ENCODE measurements at regions of chr11 and their contacts with region 1.

Region 1: GRCh38 chr11:66022401-66023185 is 3.7 kb downstream of the CATSPER1 start:
- DNase-seq: peak; percentile 59 to 76 (median 63)
- H3K4me3 ChIP-seq: no peak overlapping the region
- H3K4me3 Mint-ChIP-seq: peak overlapping the region in 4 of 8 donors; percentile 33 to 72 (median 56)
- H3K27ac ChIP-seq: no peak overlapping the region
- H3K27ac Mint-ChIP-seq: peak overlapping the region in 1 of 7 donors; percentile 48
- H3K4me1 ChIP-seq: peaks cover 6% of the 10 kb centered on the region
- H3K4me1 Mint-ChIP-seq: peaks cover 0 to 9% (median 6%) of the 10 kb centered on the region in 4 donors
- H3K27me3 ChIP-seq: no peaks in the 10 kb centered on the region
- H3K27me3 Mint-ChIP-seq: peaks cover 4 to 6% of the 10 kb centered on the region in 2 donors

Region 2: DNA sequence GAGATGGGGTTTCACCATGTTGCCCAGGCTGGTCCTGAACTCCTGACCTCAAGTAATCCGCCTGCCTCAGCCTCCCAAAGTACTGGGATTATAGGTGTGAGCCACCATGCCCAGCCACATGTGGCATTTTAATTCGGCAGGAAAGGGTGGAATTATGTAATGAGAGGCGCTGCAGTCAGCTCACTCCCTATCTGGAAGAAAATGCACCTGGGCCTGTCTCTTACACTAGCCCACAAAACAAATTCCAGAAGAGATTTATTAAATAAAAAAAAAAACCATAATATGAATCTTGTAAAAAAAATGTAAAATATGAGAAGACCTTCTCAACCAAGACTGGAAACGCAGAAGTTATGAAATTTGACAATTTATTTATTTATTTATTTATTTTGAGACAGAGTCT is 318.7 kb before region 1 on chr11:
- CTCF ChIA-PET with region 1: interaction called, 13 read pairs
- POLR2A ChIA-PET with region 1: no interaction called
- intact Hi-C with region 1: no loop called
- DNase-seq: no peak
- H3K4me3 ChIP-seq: no peak overlapping the region
- H3K4me3 Mint-ChIP-seq: no peak overlapping the region
- H3K27ac ChIP-seq: no peak overlapping the region
- H3K27ac Mint-ChIP-seq: no peak overlapping the region
- H3K4me1 ChIP-seq: no peaks in the 10 kb centered on the region
- H3K4me1 Mint-ChIP-seq: peaks cover 0 to 10% (median 0%) of the 10 kb centered on the region in 4 donors
- H3K27me3 ChIP-seq: no peaks in the 10 kb centered on the region
- H3K27me3 Mint-ChIP-seq: peaks cover 1 to 7% of the 10 kb centered on the region in 2 donors

Region 3: GRCh38 chr11:65859200-65859811 is 163.3 kb before region 1 on chr11:
- CTCF ChIA-PET with region 1: no interaction called
- POLR2A ChIA-PET with region 1: no interaction called
- intact Hi-C with region 1: no loop called
- DNase-seq: peak; percentile 89 to 98 (median 92)
- H3K4me3 ChIP-seq: peak overlapping the region; percentile 55 to 81
- H3K4me3 Mint-ChIP-seq: peak overlapping the region; percentile 93 to 99 (median 96)
- H3K27ac ChIP-seq: peak overlapping the region; percentile 85
- H3K27ac Mint-ChIP-seq: peak overlapping the region; percentile 92 to 99 (median 97)
- H3K4me1 ChIP-seq: peaks cover 58% of the 10 kb centered on the region
- H3K4me1 Mint-ChIP-seq: peaks cover 32 to 64% (median 48%) of the 10 kb centered on the region in 4 donors
- H3K27me3 ChIP-seq: no peaks in the 10 kb centered on the region
- H3K27me3 Mint-ChIP-seq: no peaks in the 10 kb centered on the region

Region 4: DNA sequence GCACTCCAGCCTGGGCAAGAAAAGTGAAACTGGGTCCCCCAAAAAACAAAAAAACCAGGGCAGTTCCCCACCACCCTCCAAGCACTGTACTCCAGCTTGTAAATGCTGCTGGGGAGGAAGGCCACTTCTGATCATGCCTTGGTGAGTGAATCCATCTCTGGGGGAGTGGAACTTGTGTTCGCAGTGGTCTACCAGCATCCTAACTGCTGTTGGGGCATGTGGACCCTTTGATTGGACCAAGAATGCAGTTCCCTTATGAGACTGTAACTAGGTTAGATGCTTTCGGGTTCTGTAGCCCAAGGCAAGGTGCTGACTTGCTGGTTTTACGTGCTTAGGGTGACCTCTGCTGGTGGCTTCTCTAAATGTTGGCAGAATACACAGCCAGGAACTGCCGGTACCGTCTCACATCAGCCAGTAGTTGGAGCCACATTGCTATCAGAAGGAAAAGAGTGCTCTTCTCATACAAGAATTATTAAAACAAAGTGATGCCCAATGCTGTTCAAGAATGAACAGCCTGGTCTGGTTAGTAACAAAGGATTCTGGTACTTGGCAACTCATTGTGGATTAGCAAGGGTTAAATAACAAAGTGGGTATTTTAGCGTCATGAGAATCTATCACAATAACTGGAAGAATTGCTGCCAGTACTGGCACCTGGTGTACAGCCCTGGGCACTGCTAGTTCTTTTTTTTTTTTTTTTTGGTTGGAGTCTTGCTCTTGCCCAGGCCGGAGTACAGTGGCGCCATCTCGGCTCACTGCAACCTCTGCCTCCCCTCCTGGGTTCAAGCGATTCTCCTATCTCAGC is 33.6 kb before region 1 on chr11:
- CTCF ChIA-PET with region 1: interaction called, 5 read pairs
- POLR2A ChIA-PET with region 1: no interaction called
- intact Hi-C with region 1: loop called (anchors 1 kb)
- DNase-seq: peak; percentile 92 to 94 (median 93)
- H3K4me3 ChIP-seq: no peak overlapping the region
- H3K4me3 Mint-ChIP-seq: peak overlapping the region in 1 of 8 donors; percentile 3
- H3K27ac ChIP-seq: no peak overlapping the region
- H3K27ac Mint-ChIP-seq: peak overlapping the region; percentile 68 to 95 (median 86)
- H3K4me1 ChIP-seq: peaks cover 6% of the 10 kb centered on the region
- H3K4me1 Mint-ChIP-seq: peaks cover 5 to 7% (median 6%) of the 10 kb centered on the region in 4 donors
- H3K27me3 ChIP-seq: no peaks in the 10 kb centered on the region
- H3K27me3 Mint-ChIP-seq: no peaks in the 10 kb centered on the region

Region 5: GRCh38 chr11:66011239-66011784 is 11.3 kb before region 1 on chr11:
- CTCF ChIA-PET with region 1: interaction called, 16 read pairs
- POLR2A ChIA-PET with region 1: no interaction called
- intact Hi-C with region 1: no loop called
- DNase-seq: no peak
- H3K4me3 ChIP-seq: no peak overlapping the region
- H3K4me3 Mint-ChIP-seq: no peak overlapping the region
- H3K27ac ChIP-seq: no peak overlapping the region
- H3K27ac Mint-ChIP-seq: no peak overlapping the region
- H3K4me1 ChIP-seq: no peaks in the 10 kb centered on the region
- H3K4me1 Mint-ChIP-seq: peaks cover 0 to 5% (median 3%) of the 10 kb centered on the region in 4 donors
- H3K27me3 ChIP-seq: peaks cover 13% of the 10 kb centered on the region
- H3K27me3 Mint-ChIP-seq: peaks cover 9 to 14% of the 10 kb centered on the region in 2 donors

Region 6: DNA sequence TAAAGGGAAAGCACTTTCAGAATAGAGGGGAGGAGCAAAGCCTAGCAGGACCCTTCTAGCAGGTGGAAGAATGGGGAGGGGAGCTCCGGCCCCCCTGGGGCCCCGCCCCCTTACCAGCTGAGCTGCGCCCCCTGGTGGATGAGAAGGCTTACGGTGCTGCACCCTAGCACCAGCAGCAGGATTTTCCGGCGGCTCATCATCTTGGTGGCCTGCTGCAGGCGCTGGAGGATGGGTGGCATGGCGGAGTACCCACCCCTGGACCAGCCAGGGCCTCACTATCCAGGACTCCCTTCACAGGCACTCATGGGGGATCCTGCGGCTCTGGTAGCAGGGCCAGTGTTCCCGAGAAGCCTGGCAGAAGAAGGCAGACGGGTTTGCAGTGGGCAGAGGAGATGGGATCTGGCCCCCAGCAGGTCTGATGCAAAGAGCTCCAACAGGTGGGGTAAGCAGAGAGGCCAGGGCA is 22.6 kb after region 1 on chr11:
- CTCF ChIA-PET with region 1: interaction called, 19 read pairs
- POLR2A ChIA-PET with region 1: no interaction called
- intact Hi-C with region 1: no loop called
- DNase-seq: peak; percentile 78 to 86 (median 81)
- H3K4me3 ChIP-seq: no peak overlapping the region
- H3K4me3 Mint-ChIP-seq: peak overlapping the region in 2 of 8 donors; percentile 32 to 55
- H3K27ac ChIP-seq: no peak overlapping the region
- H3K27ac Mint-ChIP-seq: peak overlapping the region in 2 of 7 donors; percentile 9 to 67
- H3K4me1 ChIP-seq: peaks cover 12% of the 10 kb centered on the region
- H3K4me1 Mint-ChIP-seq: peaks cover 5 to 16% (median 9%) of the 10 kb centered on the region in 4 donors
- H3K27me3 ChIP-seq: no peaks in the 10 kb centered on the region
- H3K27me3 Mint-ChIP-seq: peaks cover 0 to 2% of the 10 kb centered on the region in 2 donors

Region 7: DNA sequence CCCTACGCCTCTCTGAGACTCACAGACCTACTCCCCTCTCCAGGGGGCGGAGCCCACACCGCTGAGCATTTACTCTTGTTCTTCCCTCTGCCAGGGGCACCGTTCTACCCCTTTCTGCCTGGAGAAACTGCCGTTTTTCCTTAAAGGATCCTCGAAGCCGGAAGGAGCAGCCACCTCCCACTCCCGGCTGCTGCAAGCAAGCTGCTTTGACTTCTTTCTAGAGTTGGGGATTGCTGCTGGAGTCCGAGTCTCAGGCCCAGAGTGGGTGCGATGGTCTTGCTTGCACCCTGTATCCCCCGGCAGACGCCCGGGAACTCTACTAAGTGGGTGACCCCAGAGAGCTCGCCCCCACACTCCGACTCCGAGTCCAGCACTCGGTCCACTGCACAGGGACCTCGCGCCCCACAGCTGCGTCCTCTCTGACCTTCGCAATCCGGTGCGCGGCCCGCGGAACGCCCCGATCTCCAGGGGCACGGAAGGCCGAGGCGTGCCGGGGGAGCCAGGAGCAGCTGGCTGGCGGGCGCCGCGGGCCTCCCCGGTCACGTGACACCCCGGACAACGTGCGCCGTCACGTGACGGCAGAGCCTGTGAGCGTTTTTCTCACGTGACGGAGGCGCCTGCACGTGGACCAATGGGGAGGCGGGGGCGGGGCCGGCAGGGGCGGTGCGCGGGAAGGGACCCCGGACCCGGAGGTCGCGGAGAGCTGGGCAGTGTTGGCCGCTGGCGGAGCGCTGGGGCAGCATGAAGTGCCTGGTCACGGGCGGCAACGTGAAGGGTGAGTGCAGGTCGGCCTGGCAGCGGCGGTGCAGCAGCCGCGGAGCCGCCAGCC is 1368.9 kb after region 1 on chr11 and contains the start of gene RAD9A:
- CTCF ChIA-PET with region 1: no interaction called
- POLR2A ChIA-PET with region 1: no interaction called
- intact Hi-C with region 1: no loop called
- DNase-seq: peak; percentile 86 to 93 (median 89)
- H3K4me3 ChIP-seq: peak within 1 kb of the TSS; percentile 63 to 75
- H3K4me3 Mint-ChIP-seq: peak within 1 kb of the TSS; percentile 87 to 93 (median 91)
- H3K27ac ChIP-seq: peak within 1 kb of the TSS; percentile 79
- H3K27ac Mint-ChIP-seq: peak within 1 kb of the TSS; percentile 82 to 94 (median 87)
- H3K4me1 ChIP-seq: peaks cover 17% of the 10 kb centered on the region
- H3K4me1 Mint-ChIP-seq: peaks cover 23 to 46% (median 36%) of the 10 kb centered on the region in 4 donors
- H3K27me3 ChIP-seq: no peaks in the 10 kb centered on the region
- H3K27me3 Mint-ChIP-seq: no peaks in the 10 kb centered on the region
- total RNA-seq, gene RAD9A: 51.8 to 55.9 TPM